B cell (primary cell): ENCODE measurements at regions of chr2 and their contacts with region 1.

Region 1: GRCh38 chr2:43226558-43226954 is at the start of gene ZFP36L2:
- DNase-seq: peak; percentile 96
- ATAC-seq: peak; percentile 65
- H3K4me3 ChIP-seq: peak within 1 kb of the TSS; percentile 76 to 98 (median 92)
- H3K4me3 Mint-ChIP-seq: peak within 1 kb of the TSS; percentile 98
- H3K27ac ChIP-seq: peak within 1 kb of the TSS; percentile 90 to 93
- H3K27ac Mint-ChIP-seq: peak within 1 kb of the TSS; percentile 97
- H3K4me1 ChIP-seq: peaks cover 36 to 56% of the 10 kb centered on the region in 2 donors
- H3K4me1 Mint-ChIP-seq: peaks cover 50% of the 10 kb centered on the region
- H3K27me3 ChIP-seq: no peaks in the 10 kb centered on the region
- H3K27me3 Mint-ChIP-seq: no peaks in the 10 kb centered on the region
- CTCF ChIP-seq: no peak
- total RNA-seq, gene ZFP36L2: 455 and 482 TPM in 2 replicates

Region 2: GRCh38 chr2:42828487-42829425 is 397.8 kb before region 1 on chr2:
- CTCF ChIA-PET with region 1: interaction called, 11 read pairs
- POLR2A ChIA-PET with region 1: no interaction called
- intact Hi-C with region 1: loop called (anchors 2 kb)
- DNase-seq: peak; percentile 82
- ATAC-seq: peak; percentile 95
- H3K4me3 ChIP-seq: no peak overlapping the region
- H3K4me3 Mint-ChIP-seq: peak overlapping the region; percentile 39
- H3K27ac ChIP-seq: no peak overlapping the region
- H3K27ac Mint-ChIP-seq: peak overlapping the region; percentile 26
- H3K4me1 ChIP-seq: peaks cover 8 to 13% of the 10 kb centered on the region in 2 donors
- H3K4me1 Mint-ChIP-seq: peaks cover 16% of the 10 kb centered on the region
- H3K27me3 ChIP-seq: no peaks in the 10 kb centered on the region
- H3K27me3 Mint-ChIP-seq: peaks cover 3% of the 10 kb centered on the region
- CTCF ChIP-seq: peak; percentile 92

Region 3: GRCh38 chr2:42954227-42954962 is 272.2 kb before region 1 on chr2:
- CTCF ChIA-PET with region 1: interaction called, 12 read pairs
- POLR2A ChIA-PET with region 1: interaction called, 4 read pairs
- intact Hi-C with region 1: no loop called
- DNase-seq: no peak
- ATAC-seq: no peak
- H3K4me3 ChIP-seq: no peak overlapping the region
- H3K4me3 Mint-ChIP-seq: no peak overlapping the region
- H3K27ac ChIP-seq: no peak overlapping the region
- H3K27ac Mint-ChIP-seq: peak overlapping the region; percentile 55
- H3K4me1 ChIP-seq: peaks cover 28 to 34% of the 10 kb centered on the region in 2 donors
- H3K4me1 Mint-ChIP-seq: peaks cover 42% of the 10 kb centered on the region
- H3K27me3 ChIP-seq: no peaks in the 10 kb centered on the region
- H3K27me3 Mint-ChIP-seq: no peaks in the 10 kb centered on the region
- CTCF ChIP-seq: no peak

Region 4: DNA sequence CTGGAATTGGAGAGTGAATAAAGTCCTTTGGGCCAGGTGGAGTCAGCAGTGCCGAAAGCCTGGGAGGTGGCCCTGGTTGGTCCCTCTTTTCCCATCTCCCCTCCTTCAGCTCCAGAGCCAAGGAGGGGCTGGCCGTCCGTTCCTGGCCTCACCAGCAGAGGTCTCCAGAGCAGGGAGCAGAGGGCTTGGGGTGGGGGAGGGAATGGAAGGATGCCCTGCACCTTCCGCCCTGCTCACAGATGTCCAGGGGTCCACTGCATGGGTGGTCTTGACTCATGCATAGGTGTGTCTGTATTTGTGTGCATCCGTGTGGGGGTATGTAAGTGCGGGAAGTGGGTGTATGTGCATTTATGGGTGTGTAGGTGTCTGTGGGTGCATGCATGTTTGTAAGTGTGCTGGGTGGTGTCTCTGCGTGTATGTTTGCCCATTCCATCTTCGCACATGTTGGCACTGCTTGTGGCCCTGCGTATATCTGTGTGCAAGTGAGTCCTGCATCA is 202.0 kb before region 1 on chr2:
- CTCF ChIA-PET with region 1: interaction called, 54 read pairs
- POLR2A ChIA-PET with region 1: interaction called, 4 read pairs
- intact Hi-C with region 1: loop called (anchors 1 kb)
- DNase-seq: peak; percentile 60
- ATAC-seq: peak; percentile 75
- H3K4me3 ChIP-seq: no peak overlapping the region
- H3K4me3 Mint-ChIP-seq: no peak overlapping the region
- H3K27ac ChIP-seq: no peak overlapping the region
- H3K27ac Mint-ChIP-seq: no peak overlapping the region
- H3K4me1 ChIP-seq: peaks cover 7 to 8% of the 10 kb centered on the region in 2 donors
- H3K4me1 Mint-ChIP-seq: peaks cover 10% of the 10 kb centered on the region
- H3K27me3 ChIP-seq: no peaks in the 10 kb centered on the region
- H3K27me3 Mint-ChIP-seq: no peaks in the 10 kb centered on the region
- CTCF ChIP-seq: peak; percentile 55

Region 5: DNA sequence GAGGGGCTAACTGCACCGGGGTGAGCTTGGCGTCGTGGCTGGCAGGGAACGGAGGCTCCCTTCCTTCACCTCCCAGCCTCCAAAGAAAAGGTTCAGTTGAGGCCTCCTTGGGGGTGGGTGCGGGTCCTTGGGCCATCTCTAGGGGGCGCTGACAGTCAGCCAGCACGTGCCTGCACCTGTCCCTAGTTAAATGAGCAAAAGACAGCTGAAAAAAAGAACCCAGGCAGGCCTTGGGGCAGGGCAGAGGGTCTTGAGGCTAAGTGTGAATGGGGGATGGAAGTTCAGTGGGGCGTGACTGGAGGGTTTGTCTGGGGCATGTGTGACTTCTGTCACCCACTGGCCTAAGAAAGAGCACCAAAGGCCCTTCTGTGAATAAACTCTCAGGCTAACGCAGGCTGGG is 56.6 kb before region 1 on chr2:
- CTCF ChIA-PET with region 1: interaction called, 449 read pairs
- POLR2A ChIA-PET with region 1: interaction called, 223 read pairs
- intact Hi-C with region 1: loop called (anchors 1 kb)
- DNase-seq: peak; percentile 59
- ATAC-seq: no peak
- H3K4me3 ChIP-seq: peak overlapping the region in 3 of 5 experiments; percentile 2 to 53 (median 35)
- H3K4me3 Mint-ChIP-seq: peak overlapping the region; percentile 87
- H3K27ac ChIP-seq: peak overlapping the region; percentile 85 to 91
- H3K27ac Mint-ChIP-seq: peak overlapping the region; percentile 100
- H3K4me1 ChIP-seq: peaks cover 69 to 84% of the 10 kb centered on the region in 2 donors
- H3K4me1 Mint-ChIP-seq: peaks cover 79% of the 10 kb centered on the region
- H3K27me3 ChIP-seq: no peaks in the 10 kb centered on the region
- H3K27me3 Mint-ChIP-seq: no peaks in the 10 kb centered on the region
- CTCF ChIP-seq: peak; percentile 46

Region 6: DNA sequence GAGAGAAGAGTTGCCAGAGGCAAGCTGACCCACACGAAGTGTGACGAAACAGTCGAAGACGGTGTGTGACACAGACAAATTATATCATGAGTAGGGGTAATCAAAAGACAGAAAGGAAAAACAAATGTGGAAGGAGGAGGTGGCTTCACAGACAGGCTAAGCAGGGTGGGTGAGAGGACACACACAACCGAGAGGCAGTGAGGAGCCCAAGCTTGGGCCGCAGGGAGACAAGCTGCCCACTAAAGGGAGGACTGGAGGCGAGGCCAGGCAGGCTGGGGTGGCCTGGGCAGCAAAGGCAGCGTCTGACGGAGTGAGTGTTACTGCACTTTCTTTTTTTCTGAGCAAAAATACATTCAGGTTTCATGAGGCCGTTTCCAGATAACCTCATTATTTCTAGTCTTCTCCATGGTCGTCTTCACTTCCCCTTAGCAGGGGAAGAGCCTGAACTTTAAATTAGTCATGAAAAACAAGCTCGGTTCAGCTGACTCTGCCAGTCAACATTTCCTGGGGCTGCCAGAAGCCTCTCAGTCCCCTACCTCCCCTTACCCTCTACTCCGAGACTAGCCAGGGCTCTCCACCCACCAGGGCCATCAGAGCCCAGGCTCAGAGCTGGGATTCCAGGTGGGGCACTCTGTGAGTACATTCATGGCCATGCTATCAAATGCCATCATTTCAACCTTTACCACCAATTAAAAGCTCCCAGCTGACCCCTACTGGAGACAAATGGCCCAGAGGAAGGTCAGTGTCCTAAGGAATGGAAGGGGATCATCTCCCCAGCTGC is 13.6 kb after region 1 on chr2:
- CTCF ChIA-PET with region 1: interaction called, 51 read pairs
- POLR2A ChIA-PET with region 1: interaction called, 9 read pairs
- intact Hi-C with region 1: no loop called
- DNase-seq: peak; percentile 59
- ATAC-seq: peak; percentile 87
- H3K4me3 ChIP-seq: peak overlapping the region in 1 of 5 experiments; percentile 17
- H3K4me3 Mint-ChIP-seq: peak overlapping the region; percentile 67
- H3K27ac ChIP-seq: peak overlapping the region; percentile 63 to 89
- H3K27ac Mint-ChIP-seq: peak overlapping the region; percentile 97
- H3K4me1 ChIP-seq: peaks cover 26 to 37% of the 10 kb centered on the region in 2 donors
- H3K4me1 Mint-ChIP-seq: peaks cover 48% of the 10 kb centered on the region
- H3K27me3 ChIP-seq: no peaks in the 10 kb centered on the region
- H3K27me3 Mint-ChIP-seq: no peaks in the 10 kb centered on the region
- CTCF ChIP-seq: no peak

Region 7: DNA sequence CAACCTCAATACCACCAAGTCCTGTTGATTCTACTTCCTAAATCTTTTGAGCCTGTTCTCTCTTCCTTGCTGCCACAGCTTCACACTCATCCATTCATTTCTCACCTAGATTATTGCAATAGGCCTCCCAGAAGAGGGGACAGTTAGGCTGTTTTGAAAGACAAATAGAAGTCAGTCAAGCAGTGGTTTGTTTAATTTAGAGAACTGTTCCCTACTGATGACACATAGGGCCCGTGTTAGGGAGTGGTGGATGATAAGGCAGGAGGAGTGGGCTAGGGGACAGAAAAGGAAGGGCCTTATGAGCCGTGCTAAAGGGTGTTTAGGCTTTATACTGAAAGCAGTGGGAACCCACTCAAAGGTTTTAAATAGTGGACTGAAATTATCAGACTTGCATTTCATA is 59.4 kb after region 1 on chr2:
- CTCF ChIA-PET with region 1: no interaction called
- POLR2A ChIA-PET with region 1: no interaction called
- intact Hi-C with region 1: no loop called
- DNase-seq: no peak
- ATAC-seq: no peak
- H3K4me3 ChIP-seq: no peak overlapping the region
- H3K4me3 Mint-ChIP-seq: no peak overlapping the region
- H3K27ac ChIP-seq: no peak overlapping the region
- H3K27ac Mint-ChIP-seq: no peak overlapping the region
- H3K4me1 ChIP-seq: no peaks in the 10 kb centered on the region
- H3K4me1 Mint-ChIP-seq: no peaks in the 10 kb centered on the region
- H3K27me3 ChIP-seq: no peaks in the 10 kb centered on the region
- H3K27me3 Mint-ChIP-seq: no peaks in the 10 kb centered on the region
- CTCF ChIP-seq: no peak